Right cardiac atrium (tissue), 5 donors: ENCODE measurements at regions of chr10 and their contacts with region 1.

Region 1: GRCh38 chr10:112183329-112184051 is at the start of gene GPAM:
- DNase-seq: peak; percentile 94 to 99 (median 99)
- ATAC-seq: peak; percentile 98 to 99
- H3K4me3 ChIP-seq: peak within 1 kb of the TSS; percentile 82
- H3K27ac ChIP-seq: peak within 1 kb of the TSS; percentile 61
- H3K4me1 ChIP-seq: no peaks in the 10 kb centered on the region
- H3K27me3 ChIP-seq: no peaks in the 10 kb centered on the region
- total RNA-seq, gene GPAM: 15.1 to 31.1 (median 17.0) TPM

Region 2: GRCh38 chr10:112209684-112210131 is 26.2 kb after region 1 on chr10:
- intact Hi-C with region 1: no loop called
- DNase-seq: no peak
- ATAC-seq: peak; percentile 45 to 59
- H3K4me3 ChIP-seq: no peak overlapping the region
- H3K27ac ChIP-seq: no peak overlapping the region
- H3K4me1 ChIP-seq: peaks cover 7% of the 10 kb centered on the region
- H3K27me3 ChIP-seq: no peaks in the 10 kb centered on the region

Region 3: GRCh38 chr10:112295853-112296830 is 112.7 kb after region 1 on chr10:
- intact Hi-C with region 1: loop called (anchors 5 to 10 kb)
- DNase-seq: peak; percentile 45 to 75 (median 73)
- ATAC-seq: peak; percentile 91
- H3K4me3 ChIP-seq: no peak overlapping the region
- H3K27ac ChIP-seq: no peak overlapping the region
- H3K4me1 ChIP-seq: peaks cover 7% of the 10 kb centered on the region
- H3K27me3 ChIP-seq: no peaks in the 10 kb centered on the region

Region 4: DNA sequence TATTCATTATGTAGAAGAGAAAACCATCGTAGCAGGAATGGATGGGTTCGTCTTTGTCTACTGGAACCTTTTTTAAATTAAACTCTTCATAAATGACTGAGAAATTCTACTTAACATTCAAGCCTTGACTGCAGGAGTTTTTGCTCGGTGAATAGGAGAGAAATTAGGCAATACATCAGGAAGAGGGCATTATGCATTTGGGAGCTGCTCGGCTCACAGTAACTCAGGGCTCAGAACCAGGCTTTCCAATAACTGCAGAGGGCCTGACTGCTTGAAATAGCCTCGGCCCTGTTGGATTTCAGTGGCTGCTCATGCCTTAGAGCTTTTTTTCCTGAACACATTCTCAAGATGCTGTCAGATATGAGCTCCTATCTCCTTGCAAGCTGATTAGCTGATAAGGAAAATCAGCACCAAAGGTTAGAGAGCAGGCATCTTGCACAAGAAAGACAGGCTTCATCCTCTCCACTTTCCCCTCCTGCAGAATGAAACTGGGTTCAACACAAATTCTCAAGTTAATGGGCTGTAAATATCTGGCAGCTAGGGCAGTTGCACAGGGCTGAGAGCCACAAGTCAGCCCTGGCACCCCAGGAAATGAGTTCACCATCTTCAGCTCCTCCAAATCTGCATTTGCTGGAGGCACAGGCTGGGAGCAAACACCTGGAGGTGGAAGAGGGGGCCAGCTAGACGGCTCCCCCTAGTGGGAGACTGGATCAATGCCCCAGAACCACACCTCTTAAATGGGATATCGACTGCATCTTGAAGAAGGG is 124.1 kb after region 1 on chr10:
- intact Hi-C with region 1: loop called in 3 of 4 experiments (anchors 10 kb)
- DNase-seq: peak in 1 of 3 donors; percentile 60
- ATAC-seq: peak; percentile 35 to 57
- H3K4me3 ChIP-seq: no peak overlapping the region
- H3K27ac ChIP-seq: no peak overlapping the region
- H3K4me1 ChIP-seq: no peaks in the 10 kb centered on the region
- H3K27me3 ChIP-seq: no peaks in the 10 kb centered on the region